Endothelial cell of umbilical vein (primary cell): ENCODE measurements at regions of chr12 and their contacts with region 1.

Region 1: GRCh38 chr12:22684140-22685118 is 59.5 kb downstream of the ETNK1 start:
- DNase-seq: peak; percentile 71
- H3K4me3 ChIP-seq: no peak overlapping the region
- H3K27ac ChIP-seq: no peak overlapping the region
- H3K4me1 ChIP-seq: peaks cover 18% of the 10 kb centered on the region
- H3K27me3 ChIP-seq: no peaks in the 10 kb centered on the region
- CTCF ChIP-seq: peak; percentile 33 to 39
- POLR2A ChIP-seq: no peak

Region 2: GRCh38 chr12:22670762-22671161 is 13.7 kb before region 1 on chr12:
- CTCF ChIA-PET with region 1: interaction called, 72 read pairs
- POLR2A ChIA-PET with region 1: no interaction called
- dilution Hi-C with region 1: no loop called
- intact Hi-C with region 1: no loop called
- DNase-seq: peak; percentile 29
- H3K4me3 ChIP-seq: no peak overlapping the region
- H3K27ac ChIP-seq: no peak overlapping the region
- H3K4me1 ChIP-seq: no peaks in the 10 kb centered on the region
- H3K27me3 ChIP-seq: no peaks in the 10 kb centered on the region
- CTCF ChIP-seq: no peak
- POLR2A ChIP-seq: no peak

Region 3: DNA sequence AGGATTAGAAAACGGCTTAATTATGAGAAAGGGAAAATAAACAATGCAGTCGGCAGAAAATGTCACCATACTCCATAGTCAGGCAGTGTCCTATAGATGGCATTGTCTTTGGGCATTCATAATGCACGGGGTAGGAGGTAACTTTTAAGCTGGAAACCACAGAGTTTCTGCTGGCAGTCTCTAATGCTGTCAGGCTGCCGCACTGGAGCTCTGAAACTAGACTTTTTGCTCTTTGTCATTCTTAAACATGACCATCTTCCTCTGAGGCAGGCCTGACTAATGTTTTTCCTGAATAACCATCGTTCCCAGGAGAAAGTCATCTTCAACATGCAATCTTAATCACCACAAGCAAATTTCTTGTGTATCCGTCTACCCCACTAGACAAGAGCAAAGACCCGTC is 49.3 kb after region 1 on chr12:
- CTCF ChIA-PET with region 1: no interaction called
- POLR2A ChIA-PET with region 1: no interaction called
- dilution Hi-C with region 1: no loop called
- intact Hi-C with region 1: no loop called
- DNase-seq: no peak
- H3K4me3 ChIP-seq: no peak overlapping the region
- H3K27ac ChIP-seq: no peak overlapping the region
- H3K4me1 ChIP-seq: no peaks in the 10 kb centered on the region
- H3K27me3 ChIP-seq: no peaks in the 10 kb centered on the region
- CTCF ChIP-seq: no peak
- POLR2A ChIP-seq: no peak

Region 4: GRCh38 chr12:22856178-22856577 is 171.7 kb after region 1 on chr12:
- CTCF ChIA-PET with region 1: interaction called, 49 read pairs
- POLR2A ChIA-PET with region 1: no interaction called
- dilution Hi-C with region 1: no loop called
- intact Hi-C with region 1: loop called (anchors 10 kb)
- DNase-seq: peak; percentile 42
- H3K4me3 ChIP-seq: no peak overlapping the region
- H3K27ac ChIP-seq: no peak overlapping the region
- H3K4me1 ChIP-seq: no peaks in the 10 kb centered on the region
- H3K27me3 ChIP-seq: peaks cover 0 to 1% of the 10 kb centered on the region in 2 experiments
- CTCF ChIP-seq: peak; percentile 13 to 14
- POLR2A ChIP-seq: no peak

Region 5: DNA sequence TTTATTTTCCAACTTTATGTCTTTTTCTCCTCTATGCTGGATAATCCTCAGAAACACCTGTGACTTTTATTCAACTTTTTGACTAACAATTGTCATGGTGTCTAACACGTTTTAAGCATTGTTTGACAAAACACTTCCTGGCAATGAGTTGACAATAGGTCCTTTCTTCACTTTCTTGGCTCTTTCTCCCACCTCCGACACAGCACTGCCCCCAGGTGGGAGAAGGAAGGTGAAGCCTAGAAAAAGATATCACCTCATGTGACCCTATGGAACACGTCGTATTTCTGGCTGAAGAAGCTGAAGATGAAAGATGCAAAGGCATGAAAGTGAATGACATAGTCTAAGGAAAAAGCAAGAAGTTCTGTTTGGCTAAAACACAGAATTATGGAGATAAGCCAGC is 370.6 kb after region 1 on chr12:
- CTCF ChIA-PET with region 1: interaction called, 6 read pairs
- POLR2A ChIA-PET with region 1: no interaction called
- dilution Hi-C with region 1: no loop called
- intact Hi-C with region 1: loop called (anchors 1 kb)
- DNase-seq: peak; percentile 4
- H3K4me3 ChIP-seq: no peak overlapping the region
- H3K27ac ChIP-seq: no peak overlapping the region
- H3K4me1 ChIP-seq: no peaks in the 10 kb centered on the region
- H3K27me3 ChIP-seq: no peaks in the 10 kb centered on the region
- CTCF ChIP-seq: peak; percentile 11 to 22
- POLR2A ChIP-seq: no peak

Region 6: DNA sequence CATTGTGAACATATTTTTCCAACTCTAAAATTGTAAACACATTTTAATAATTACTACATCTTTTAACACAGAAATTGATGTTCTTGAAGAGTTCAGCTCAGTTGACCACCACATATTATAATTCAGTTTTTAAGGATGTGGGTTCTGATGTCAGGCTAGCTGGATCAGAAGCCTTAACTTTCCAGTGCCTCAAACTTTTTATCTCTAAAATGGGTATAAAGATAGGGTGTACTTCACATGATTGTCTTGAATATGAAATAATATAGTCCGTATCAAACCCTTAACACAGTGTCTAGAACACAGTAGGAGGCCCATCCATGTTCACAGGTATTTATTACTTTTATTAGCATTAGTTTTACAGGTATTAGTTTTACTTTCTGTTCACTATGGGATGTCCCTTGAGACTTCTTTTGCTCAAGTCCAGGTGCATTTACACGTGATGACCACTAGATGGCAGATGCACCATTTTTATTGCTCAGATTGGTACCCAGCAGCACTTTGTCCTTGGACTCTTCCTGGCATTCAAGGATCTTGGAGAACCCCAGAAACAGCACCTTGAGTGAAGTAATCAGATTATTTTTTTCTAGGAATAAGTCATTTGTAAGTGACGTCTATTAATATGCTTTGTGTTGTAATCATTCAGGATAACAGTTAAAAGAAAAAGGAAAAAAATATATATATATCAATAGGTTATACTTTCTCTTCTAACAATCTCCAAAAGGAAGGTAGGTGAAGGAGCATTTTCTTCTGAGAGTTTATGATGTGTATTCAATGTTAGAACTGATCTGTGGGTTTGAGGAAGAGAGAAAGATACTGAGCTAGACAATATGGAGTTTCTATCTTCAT is 520.7 kb after region 1 on chr12:
- CTCF ChIA-PET with region 1: interaction called, 7 read pairs
- POLR2A ChIA-PET with region 1: no interaction called
- dilution Hi-C with region 1: no loop called
- intact Hi-C with region 1: loop called (anchors 10 kb)
- DNase-seq: peak; percentile 65
- H3K4me3 ChIP-seq: no peak overlapping the region
- H3K27ac ChIP-seq: no peak overlapping the region
- H3K4me1 ChIP-seq: no peaks in the 10 kb centered on the region
- H3K27me3 ChIP-seq: peaks cover 0 to 3% of the 10 kb centered on the region in 2 experiments
- CTCF ChIP-seq: peak; percentile 67 to 74
- POLR2A ChIP-seq: no peak